ENCODE measurements at regions of chr6 and their contacts with region 1.

Region 1: GRCh38 chr6:7910654-7911344 is at the start of gene TXNDC5:
- DNase-seq: peak; percentile 60
- ATAC-seq: peak; percentile 76
- H3K4me3 ChIP-seq: peak within 1 kb of the TSS; percentile 69 to 87 (median 85)
- H3K27ac ChIP-seq: peak within 1 kb of the TSS; percentile 75
- H3K4me1 ChIP-seq: peaks cover 83% of the 10 kb centered on the region
- H3K27me3 ChIP-seq: no peaks in the 10 kb centered on the region
- CTCF ChIP-seq: no peak; the same call in 1 of the 2 replicates
- EP300 ChIP-seq: no peak; a peak in 1 of 4 replicates
- POLR2A ChIP-seq: peak; percentile 49 to 83; a peak in 2 of 4 replicates
- RAD21 ChIP-seq: no peak
- total RNA-seq, gene TXNDC5: 376 and 578 TPM in 2 replicates

Region 2: DNA sequence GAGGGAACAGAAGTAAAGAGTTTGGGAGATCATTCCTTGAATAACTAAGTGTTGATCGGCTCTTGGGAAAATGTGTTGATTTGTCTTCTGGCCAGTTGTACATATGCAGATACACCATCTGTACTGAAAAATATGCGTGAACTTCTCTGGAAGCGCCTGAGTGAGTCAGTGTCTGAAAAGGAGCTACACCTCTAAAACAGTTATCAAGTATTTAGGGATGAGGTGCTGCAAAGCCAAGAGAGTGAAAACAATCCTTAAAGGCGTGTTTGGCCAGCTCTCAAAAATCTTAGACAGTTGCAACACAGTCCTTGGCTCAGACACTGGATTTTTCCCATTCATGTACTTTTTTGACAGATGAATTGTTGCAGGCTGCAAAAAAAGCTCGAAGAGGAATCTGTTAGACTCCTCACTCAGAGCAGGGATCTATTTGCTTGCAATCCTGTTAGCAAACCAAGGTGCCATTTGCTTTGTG is 123.6 kb before region 1 on chr6:
- CTCF ChIA-PET with region 1: no interaction called
- POLR2A ChIA-PET with region 1: no interaction called
- in situ Hi-C with region 1: no loop called
- intact Hi-C with region 1: no loop called
- DNase-seq: no peak
- ATAC-seq: no peak
- H3K4me3 ChIP-seq: no peak overlapping the region
- H3K27ac ChIP-seq: no peak overlapping the region
- H3K4me1 ChIP-seq: no peaks in the 10 kb centered on the region
- H3K27me3 ChIP-seq: peaks cover 4 to 59% of the 10 kb centered on the region in 2 experiments; a peak in 4 of 5 replicates
- CTCF ChIP-seq: no peak
- EP300 ChIP-seq: no peak
- POLR2A ChIP-seq: no peak
- RAD21 ChIP-seq: no peak

Region 3: DNA sequence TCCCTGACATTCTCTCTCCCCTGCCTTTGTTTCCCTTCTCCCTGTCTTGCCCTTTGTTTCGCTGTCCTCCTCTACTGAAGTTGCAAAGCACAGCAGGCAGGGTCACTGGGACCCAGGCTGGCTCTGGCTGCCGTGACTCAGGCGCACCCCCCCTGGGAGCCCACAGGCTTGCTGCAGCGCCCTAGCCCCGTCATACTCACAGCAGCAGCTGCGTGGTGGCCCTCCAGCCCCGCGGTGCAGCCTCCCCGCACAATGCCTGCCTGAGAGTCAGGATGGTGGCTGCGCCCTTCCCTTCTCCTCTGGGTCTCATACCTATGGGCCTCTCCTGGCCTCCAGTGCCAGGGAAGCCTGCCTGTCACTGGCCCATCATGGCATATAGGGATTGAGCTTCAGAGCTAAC is 41.9 kb before region 1 on chr6:
- CTCF ChIA-PET with region 1: no interaction called
- POLR2A ChIA-PET with region 1: no interaction called
- in situ Hi-C with region 1: no loop called
- intact Hi-C with region 1: loop called (anchors 1 kb)
- DNase-seq: no peak
- ATAC-seq: peak; percentile 37
- H3K4me3 ChIP-seq: no peak overlapping the region
- H3K27ac ChIP-seq: no peak overlapping the region
- H3K4me1 ChIP-seq: no peaks in the 10 kb centered on the region
- H3K27me3 ChIP-seq: peaks cover 3 to 26% of the 10 kb centered on the region in 2 experiments; a peak in 3 of 5 replicates
- CTCF ChIP-seq: no peak
- EP300 ChIP-seq: no peak
- POLR2A ChIP-seq: no peak
- RAD21 ChIP-seq: no peak

Region 4: GRCh38 chr6:7899101-7899888 is 11.5 kb before region 1 on chr6:
- CTCF ChIA-PET with region 1: no interaction called
- POLR2A ChIA-PET with region 1: interaction called, 15 read pairs
- in situ Hi-C with region 1: no loop called
- intact Hi-C with region 1: no loop called
- DNase-seq: peak; percentile 50
- ATAC-seq: peak; percentile 72
- H3K4me3 ChIP-seq: no peak overlapping the region
- H3K27ac ChIP-seq: no peak overlapping the region
- H3K4me1 ChIP-seq: peaks cover 25% of the 10 kb centered on the region
- H3K27me3 ChIP-seq: no peaks in the 10 kb centered on the region
- CTCF ChIP-seq: peak; percentile 67
- EP300 ChIP-seq: no peak
- POLR2A ChIP-seq: no peak
- RAD21 ChIP-seq: peak; percentile 67

Region 5: DNA sequence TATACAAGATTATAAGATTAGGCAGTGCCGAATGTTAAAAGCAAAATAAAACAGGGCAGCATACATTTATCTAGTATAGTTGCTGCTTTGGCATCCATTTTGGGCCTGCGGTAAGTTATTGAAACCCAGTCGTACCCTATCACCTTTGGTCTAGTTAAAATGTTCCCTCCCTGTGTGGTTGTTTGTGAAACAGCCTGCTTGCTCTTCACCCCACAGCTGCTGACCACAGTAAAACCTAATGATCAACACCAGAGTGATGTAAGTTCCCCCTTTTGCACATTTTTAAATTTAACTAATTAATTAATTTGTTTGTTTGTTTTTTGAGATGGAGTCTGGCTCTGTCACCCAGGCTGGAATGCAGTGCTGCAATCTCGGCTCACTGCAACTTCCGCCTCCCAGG is 50.0 kb after region 1 on chr6:
- CTCF ChIA-PET with region 1: no interaction called
- POLR2A ChIA-PET with region 1: no interaction called
- in situ Hi-C with region 1: no loop called
- intact Hi-C with region 1: no loop called
- DNase-seq: no peak
- ATAC-seq: no peak
- H3K4me3 ChIP-seq: no peak overlapping the region
- H3K27ac ChIP-seq: no peak overlapping the region
- H3K4me1 ChIP-seq: no peaks in the 10 kb centered on the region
- H3K27me3 ChIP-seq: no peaks in the 10 kb centered on the region
- CTCF ChIP-seq: no peak
- EP300 ChIP-seq: no peak
- POLR2A ChIP-seq: no peak
- RAD21 ChIP-seq: no peak

Region 6: DNA sequence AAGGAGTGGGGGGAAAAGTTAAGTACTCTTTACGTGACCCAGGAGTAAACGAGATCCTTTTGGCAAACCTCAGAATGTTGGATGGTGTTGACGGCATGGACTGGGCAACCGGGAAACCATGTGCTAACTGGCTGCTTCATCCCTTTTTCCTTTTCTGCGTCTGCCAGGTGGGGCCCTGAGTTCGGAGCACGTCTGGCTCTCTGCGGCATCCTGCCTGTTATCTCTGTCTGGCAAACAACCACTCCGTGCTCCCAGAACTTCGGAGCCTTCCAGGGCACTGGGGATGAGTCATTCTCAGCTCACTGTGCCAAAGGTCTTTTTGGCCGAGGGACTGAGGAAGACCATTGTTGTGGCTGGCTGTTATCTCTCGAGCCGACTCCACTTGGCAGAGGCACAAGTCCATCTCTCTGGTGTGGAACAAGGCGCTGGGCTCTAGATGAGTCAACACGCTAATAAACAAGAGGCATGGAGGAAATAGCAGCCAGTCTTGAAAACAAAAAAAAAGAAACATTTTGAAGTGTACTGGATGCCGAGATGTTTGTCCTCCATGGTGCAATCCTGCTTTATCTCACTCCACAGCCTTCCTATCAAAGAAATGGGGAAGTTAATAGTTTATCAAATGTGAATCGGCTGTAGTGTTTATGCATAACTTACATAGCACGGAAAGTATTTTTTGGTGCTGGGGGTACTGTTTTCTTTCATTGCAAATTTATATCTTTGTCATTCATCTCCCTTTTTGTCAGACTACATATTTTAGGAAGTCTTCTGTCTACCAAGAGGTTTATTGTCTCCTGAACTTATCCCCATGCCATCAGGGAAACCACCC is 64.4 kb after region 1 on chr6:
- CTCF ChIA-PET with region 1: no interaction called
- POLR2A ChIA-PET with region 1: interaction called, 4 read pairs
- in situ Hi-C with region 1: no loop called
- intact Hi-C with region 1: loop called (anchors 1 kb)
- DNase-seq: peak; percentile 100
- ATAC-seq: peak; percentile 97
- H3K4me3 ChIP-seq: peak overlapping the region; percentile 18 to 49 (median 44); a peak in 5 of 6 replicates
- H3K27ac ChIP-seq: peak overlapping the region; percentile 73
- H3K4me1 ChIP-seq: peaks cover 36% of the 10 kb centered on the region
- H3K27me3 ChIP-seq: no peaks in the 10 kb centered on the region
- CTCF ChIP-seq: peak; percentile 31; the same call in 1 of the 2 replicates
- EP300 ChIP-seq: peak; percentile 22 to 94; a peak in 3 of 4 replicates
- POLR2A ChIP-seq: peak in 1 of 2 experiments; percentile 45; a peak in 2 of 4 replicates
- RAD21 ChIP-seq: peak; percentile 35; the same call in 1 of the 2 replicates

Region 7: DNA sequence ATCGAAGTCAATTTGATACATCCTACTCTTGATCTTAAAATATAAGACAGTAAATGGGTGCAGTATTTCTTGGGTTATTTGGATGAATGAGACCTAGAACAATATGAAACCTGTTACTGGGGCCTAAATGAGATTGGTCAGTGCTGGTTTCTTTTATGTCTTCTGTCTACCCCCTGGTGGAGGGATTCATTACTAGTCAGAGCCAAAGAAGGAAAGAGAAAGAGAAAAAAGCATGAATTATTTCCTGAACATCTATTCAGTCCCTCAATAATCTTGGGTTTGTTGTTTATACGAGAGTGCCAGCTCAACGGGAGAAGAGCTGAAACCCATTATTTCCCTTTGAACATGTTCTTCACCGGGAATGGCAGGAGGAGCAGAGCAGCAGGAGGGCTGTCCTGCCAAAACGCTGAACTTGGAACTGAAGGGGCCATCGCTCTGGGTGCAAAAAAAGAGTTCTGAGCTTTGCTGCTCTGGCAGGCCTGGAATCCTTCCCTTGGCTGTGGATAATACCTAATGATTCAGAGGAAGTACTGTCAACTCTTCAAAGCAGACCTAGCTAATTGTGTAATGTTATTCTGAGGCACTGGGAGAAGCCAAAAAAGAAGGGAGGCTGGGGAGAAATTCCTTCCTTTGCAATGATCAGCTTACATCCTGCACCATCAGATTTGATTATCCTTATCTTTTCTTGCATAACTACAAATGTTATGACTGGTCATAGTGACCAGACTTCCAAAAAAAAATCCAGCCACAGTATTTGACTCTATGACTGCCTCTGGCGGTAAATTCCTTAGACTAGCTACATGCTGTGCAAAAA is 81.4 kb after region 1 on chr6:
- CTCF ChIA-PET with region 1: interaction called, 3 read pairs
- POLR2A ChIA-PET with region 1: no interaction called
- in situ Hi-C with region 1: no loop called
- intact Hi-C with region 1: loop called (anchors 1 kb)
- DNase-seq: peak; percentile 69
- ATAC-seq: peak; percentile 88
- H3K4me3 ChIP-seq: no peak overlapping the region
- H3K27ac ChIP-seq: no peak overlapping the region
- H3K4me1 ChIP-seq: peaks cover 16% of the 10 kb centered on the region; the same call in 1 of the 2 replicates
- H3K27me3 ChIP-seq: no peaks in the 10 kb centered on the region
- CTCF ChIP-seq: peak; percentile 74
- EP300 ChIP-seq: no peak
- POLR2A ChIP-seq: no peak
- RAD21 ChIP-seq: peak; percentile 88

Region 8: DNA sequence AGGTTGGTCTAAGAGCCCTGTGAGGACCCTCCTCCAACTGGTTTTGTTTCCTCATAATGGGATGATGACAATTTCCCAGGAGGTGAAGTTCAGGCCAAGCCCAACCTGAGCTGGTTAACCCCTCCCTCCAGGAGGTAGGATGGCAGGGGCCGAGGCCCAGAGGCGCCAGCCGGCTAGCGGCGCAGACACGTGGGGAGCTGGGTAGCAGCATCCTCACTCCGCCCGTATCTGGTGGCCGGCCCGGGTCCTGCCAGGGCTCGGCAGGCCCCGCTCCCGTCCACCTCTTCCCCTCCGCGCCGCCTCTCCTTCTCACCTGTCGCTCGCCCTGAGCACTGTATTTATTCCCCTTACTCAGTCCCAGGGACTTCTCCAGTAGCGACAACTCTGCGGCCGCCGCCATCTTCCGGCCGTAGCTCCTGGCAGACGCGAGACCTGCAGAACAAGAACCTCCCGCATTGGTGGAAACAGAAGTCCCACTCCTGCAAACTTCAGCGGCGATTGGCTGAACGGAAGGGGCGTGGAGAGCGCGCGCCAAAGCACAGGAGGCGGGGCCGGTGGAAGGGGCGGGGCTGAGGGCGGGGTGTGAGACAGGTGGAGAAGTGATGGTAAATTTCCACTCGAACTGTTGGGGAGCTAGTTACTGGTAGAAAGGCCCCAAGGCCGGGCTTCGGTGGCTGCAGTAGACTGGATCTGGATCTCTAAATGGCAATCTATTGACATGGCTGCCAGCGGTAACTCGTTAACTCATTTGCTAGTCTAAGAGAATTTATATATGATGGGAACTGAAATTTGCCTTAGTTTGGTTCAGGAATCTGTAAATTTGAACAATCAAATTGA is 191.5 kb after region 1 on chr6 and contains the start of gene EEF1E1:
- CTCF ChIA-PET with region 1: no interaction called
- POLR2A ChIA-PET with region 1: interaction called, 11 read pairs
- in situ Hi-C with region 1: no loop called
- intact Hi-C with region 1: no loop called
- DNase-seq: peak; percentile 97
- ATAC-seq: peak; percentile 98
- H3K4me3 ChIP-seq: peak within 1 kb of the TSS; percentile 91 to 99 (median 93)
- H3K27ac ChIP-seq: peak within 1 kb of the TSS; percentile 79
- H3K4me1 ChIP-seq: peaks cover 41% of the 10 kb centered on the region
- H3K27me3 ChIP-seq: peaks cover 0 to 5% of the 10 kb centered on the region in 2 experiments; a peak in 1 of 5 replicates
- CTCF ChIP-seq: 0 out of 2 replicates have a peak, but pooled peaks have one; percentile 13
- EP300 ChIP-seq: peak; percentile 28 to 79; a peak in 3 of 4 replicates
- POLR2A ChIP-seq: peak; percentile 81 to 82
- RAD21 ChIP-seq: peak; percentile 61
- total RNA-seq, gene EEF1E1: 188 and 270 TPM in 2 replicates